ENCODE measurements at regions of chr15 and their contacts with region 1.

Region 1: GRCh38 chr15:98428253-98428989 is 219.9 kb upstream of the IGF1R start:
- DNase-seq: no peak
- ATAC-seq: peak; percentile 90
- H3K4me3 ChIP-seq: peak overlapping the region; percentile 39 to 54
- H3K27ac ChIP-seq: no peak overlapping the region
- H3K4me1 ChIP-seq: no peaks in the 10 kb centered on the region
- H3K27me3 ChIP-seq: 0 out of 2 replicates have a peak, but pooled peaks cover 5% of the 10 kb centered on the region
- CTCF ChIP-seq: peak; percentile 96

Region 2: GRCh38 chr15:97731859-97732258 is 696.6 kb before region 1 on chr15:
- CTCF ChIA-PET with region 1: no interaction called
- POLR2A ChIA-PET with region 1: no interaction called
- in situ Hi-C with region 1: no loop called
- intact Hi-C with region 1: no loop called
- DNase-seq: no peak
- ATAC-seq: no peak
- H3K4me3 ChIP-seq: no peak overlapping the region
- H3K27ac ChIP-seq: no peak overlapping the region
- H3K4me1 ChIP-seq: no peaks in the 10 kb centered on the region
- H3K27me3 ChIP-seq: peaks cover 2% of the 10 kb centered on the region; the same call in 1 of the 2 replicates
- CTCF ChIP-seq: no peak

Region 3: GRCh38 chr15:98187549-98187948 is 240.9 kb before region 1 on chr15:
- CTCF ChIA-PET with region 1: no interaction called
- POLR2A ChIA-PET with region 1: no interaction called
- in situ Hi-C with region 1: no loop called
- intact Hi-C with region 1: loop called (anchors 10 kb)
- DNase-seq: no peak
- ATAC-seq: no peak
- H3K4me3 ChIP-seq: no peak overlapping the region
- H3K27ac ChIP-seq: no peak overlapping the region
- H3K4me1 ChIP-seq: no peaks in the 10 kb centered on the region
- H3K27me3 ChIP-seq: peaks cover 11% of the 10 kb centered on the region
- CTCF ChIP-seq: no peak

Region 4: DNA sequence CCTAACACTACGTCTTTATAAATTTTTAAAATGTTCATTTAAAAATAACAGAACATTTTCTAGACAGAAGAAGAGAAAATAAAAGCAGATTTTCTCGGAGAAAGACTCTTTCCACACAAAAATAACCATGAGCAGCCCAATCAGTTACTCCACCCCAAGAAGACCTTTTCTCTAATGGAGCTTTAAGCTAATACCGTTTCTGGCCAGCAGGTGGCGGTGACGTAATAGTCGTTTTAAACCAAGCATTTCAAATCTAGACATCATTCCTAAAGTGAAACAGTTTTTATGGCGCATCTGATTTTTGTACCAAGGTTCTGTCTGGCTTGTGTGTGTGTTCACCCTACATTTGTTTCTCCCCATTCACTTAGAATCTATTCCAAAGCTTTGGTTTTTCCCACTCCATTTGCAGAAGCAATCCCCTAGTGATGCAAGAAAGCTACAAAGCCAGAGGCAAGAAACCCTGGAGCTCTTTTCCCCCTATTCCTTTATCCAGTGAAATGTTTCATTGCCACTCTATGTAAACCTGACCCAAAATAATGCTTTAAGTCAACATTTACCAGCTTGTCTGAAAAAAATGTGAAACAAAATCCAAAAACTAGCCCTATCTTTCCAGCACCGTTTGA is 116.7 kb before region 1 on chr15:
- CTCF ChIA-PET with region 1: interaction called, 12 read pairs
- POLR2A ChIA-PET with region 1: no interaction called
- in situ Hi-C with region 1: no loop called
- intact Hi-C with region 1: no loop called
- DNase-seq: peak; percentile 47
- ATAC-seq: peak; percentile 69; the same call in 1 of the 2 replicates
- H3K4me3 ChIP-seq: no peak overlapping the region
- H3K27ac ChIP-seq: no peak overlapping the region
- H3K4me1 ChIP-seq: no peaks in the 10 kb centered on the region
- H3K27me3 ChIP-seq: peaks cover 4% of the 10 kb centered on the region; the same call in 1 of the 2 replicates
- CTCF ChIP-seq: peak; percentile 84

Measured in Panc1 (cell line).